Prostate gland (tissue), 2 donors: ENCODE measurements at regions of chr20 and their contacts with region 1.

Region 1: GRCh38 chr20:2451939-2452732 is 18.5 kb downstream of the SNRPB start:
- DNase-seq: peak; percentile 71
- H3K4me3 ChIP-seq: no peak overlapping the region
- H3K27ac ChIP-seq: peak overlapping the region in 1 of 2 donors; percentile 44
- H3K4me1 ChIP-seq: no peaks in the 10 kb centered on the region
- H3K27me3 ChIP-seq: no peaks in the 10 kb centered on the region
- CTCF ChIP-seq: peak; percentile 50 to 74 (median 60)
- POLR2A ChIP-seq: no peak

Region 2: DNA sequence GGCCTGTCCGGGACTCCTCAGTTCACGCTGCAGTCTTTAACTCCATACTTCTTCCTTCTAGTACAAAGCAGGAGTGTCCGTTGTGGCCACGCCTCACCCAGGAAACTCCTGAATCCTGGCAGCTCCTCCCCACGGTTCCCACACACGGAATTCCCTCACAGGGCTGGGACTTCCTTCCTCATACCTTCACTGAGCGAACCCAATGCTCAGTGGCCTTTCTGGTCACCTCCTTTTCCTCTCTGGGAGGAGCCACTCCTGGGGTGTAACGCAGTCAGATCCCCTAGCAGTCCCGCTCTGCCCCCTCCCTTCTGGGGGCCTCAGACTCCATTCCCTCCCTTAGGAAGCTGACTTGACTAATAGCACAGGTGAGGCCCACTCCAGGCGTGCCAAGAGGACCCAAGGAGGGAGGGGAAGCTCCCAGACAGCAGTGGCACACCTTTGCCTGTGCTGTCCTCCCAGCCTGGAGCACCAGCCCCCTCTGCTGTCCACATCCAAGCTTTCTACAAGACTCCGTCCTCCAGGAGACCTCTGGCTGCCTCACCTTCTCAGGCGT is 1683.6 kb before region 1 on chr20 and contains the start of gene SLC52A3:
- intact Hi-C with region 1: no loop called
- DNase-seq: peak; percentile 85
- H3K4me3 ChIP-seq: peak within 1 kb of the TSS in 1 of 2 donors; percentile 30
- H3K27ac ChIP-seq: peak within 1 kb of the TSS; percentile 52 to 74
- H3K4me1 ChIP-seq: peaks cover 6% of the 10 kb centered on the region
- H3K27me3 ChIP-seq: no peaks in the 10 kb centered on the region
- CTCF ChIP-seq: peak in 3 of 4 experiments; percentile 52 to 73 (median 58)
- POLR2A ChIP-seq: peak; percentile 39
- total RNA-seq, gene SLC52A3: 34.3 to 221 TPM

Region 3: DNA sequence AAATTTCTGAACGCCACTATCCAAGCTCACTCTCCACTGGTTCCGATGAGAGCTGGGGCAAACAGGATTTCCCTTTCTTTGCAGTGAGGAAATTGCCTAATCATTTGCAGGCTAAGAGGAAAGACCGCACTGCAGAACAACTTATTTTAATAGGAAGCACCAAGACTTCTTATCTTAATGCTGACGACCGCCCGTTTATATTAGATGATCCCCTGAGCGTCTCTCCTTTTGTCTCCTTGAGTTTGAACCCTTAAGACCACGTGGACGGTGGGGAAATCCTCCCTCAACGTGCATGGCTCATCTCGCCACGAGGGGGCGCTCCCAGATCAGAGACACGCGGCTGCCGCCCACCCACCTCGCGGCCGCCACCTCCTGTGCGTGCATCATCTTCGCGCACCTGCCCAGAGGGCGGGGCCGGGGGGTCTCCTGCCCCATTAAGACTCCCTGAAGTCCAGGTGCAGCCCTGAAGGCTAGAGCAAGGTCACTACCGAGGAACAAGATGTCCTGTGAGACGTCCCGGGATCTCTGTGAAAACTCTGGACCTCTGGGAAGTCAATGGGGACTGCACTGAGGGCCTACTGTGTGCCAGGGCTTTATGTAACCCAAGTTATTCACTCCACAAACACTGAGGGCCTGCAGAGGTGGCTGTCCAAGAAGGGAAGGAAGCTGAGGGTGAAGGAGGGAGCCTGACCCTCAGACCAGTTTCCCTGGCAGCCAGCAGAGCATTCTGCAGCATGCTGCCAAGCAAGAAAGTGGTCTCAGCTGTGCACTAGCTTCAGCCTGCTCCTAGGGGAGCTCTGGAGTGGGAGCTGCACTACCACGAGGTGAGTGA is 486.4 kb before region 1 on chr20:
- intact Hi-C with region 1: loop called (anchors 5 kb)
- DNase-seq: peak; percentile 49
- H3K4me3 ChIP-seq: no peak overlapping the region
- H3K27ac ChIP-seq: no peak overlapping the region
- H3K4me1 ChIP-seq: no peaks in the 10 kb centered on the region
- H3K27me3 ChIP-seq: no peaks in the 10 kb centered on the region
- CTCF ChIP-seq: peak; percentile 89 to 95 (median 94)
- POLR2A ChIP-seq: no peak

Region 4: DNA sequence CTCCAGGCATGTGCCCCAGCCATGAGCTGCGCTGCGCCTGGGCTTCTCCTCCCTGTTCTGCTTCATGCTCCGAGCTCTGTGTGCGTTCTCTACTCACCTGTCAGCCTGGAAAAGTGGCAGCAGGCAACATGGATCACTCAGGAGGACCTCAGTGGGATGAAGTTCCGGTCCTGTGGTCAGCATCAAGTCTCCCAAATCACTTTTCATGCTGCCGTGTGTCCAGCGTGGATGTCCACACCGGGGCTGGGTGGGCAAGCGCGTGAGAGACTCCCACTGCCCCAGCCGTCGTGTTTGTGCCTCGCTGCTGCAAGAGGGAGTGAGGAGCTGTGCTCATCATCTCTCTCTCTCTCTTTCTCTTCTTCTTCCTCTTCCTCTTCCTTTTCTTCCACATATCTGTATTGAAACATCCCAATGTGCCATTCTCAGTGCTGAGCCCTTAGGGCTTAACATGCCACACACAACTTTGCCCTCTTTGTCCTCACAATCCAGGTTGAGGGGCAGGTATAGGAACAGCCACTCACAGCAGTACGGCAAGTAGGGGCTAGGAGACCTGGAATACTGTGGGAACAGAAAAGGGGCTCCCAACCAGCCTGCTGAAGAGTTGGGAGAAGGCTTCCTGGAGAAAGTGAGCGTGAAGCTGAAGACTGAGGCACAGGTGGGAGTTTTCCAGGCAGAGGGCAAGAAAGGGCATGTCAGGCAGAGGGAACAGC is 454.5 kb before region 1 on chr20:
- intact Hi-C with region 1: no loop called
- DNase-seq: no peak
- H3K4me3 ChIP-seq: no peak overlapping the region
- H3K27ac ChIP-seq: no peak overlapping the region
- H3K4me1 ChIP-seq: no peaks in the 10 kb centered on the region
- H3K27me3 ChIP-seq: peaks cover 7% of the 10 kb centered on the region
- CTCF ChIP-seq: no peak
- POLR2A ChIP-seq: no peak

Region 5: DNA sequence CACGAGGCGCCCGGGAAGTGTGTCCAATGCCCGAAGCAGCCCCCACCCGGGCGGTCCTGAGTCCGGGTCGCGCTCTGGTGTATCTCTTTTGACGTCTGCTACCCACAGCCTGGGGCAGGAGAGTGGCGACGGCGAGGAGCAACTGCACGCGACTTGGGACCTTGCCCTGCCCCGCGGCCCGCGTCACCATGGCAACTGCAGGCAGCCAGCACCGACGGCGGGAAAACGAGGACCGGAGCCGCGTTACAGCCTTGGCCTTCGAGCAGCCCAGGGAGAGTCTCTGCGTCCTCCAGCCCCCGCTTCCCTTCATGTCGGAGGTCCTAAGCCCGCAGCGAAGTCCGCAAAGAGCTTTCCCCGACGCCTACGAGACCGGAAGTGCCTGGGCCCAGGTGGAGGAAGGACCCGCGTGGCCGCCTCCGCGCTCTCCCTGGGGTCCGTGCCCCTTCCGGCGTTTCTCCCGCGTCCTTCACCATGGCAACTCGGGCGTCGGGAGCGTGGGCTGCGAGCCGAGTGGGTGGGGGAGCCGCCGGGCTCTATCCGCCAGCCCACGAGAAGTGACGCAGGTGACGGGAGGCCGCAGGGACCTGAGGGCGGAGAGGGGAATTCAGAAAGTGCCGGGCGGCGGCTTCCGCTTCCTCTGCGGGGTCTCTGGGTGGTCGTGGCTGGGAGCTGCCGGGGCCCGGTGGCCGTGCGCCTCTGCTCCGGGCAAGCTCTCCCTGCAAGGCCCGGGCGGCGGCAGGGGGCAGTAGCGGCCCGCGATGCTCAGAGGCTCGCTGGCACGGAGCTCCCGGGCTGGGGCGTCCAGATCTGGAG is 245.0 kb before region 1 on chr20:
- intact Hi-C with region 1: loop called (anchors 2 kb)
- DNase-seq: peak; percentile 43
- H3K4me3 ChIP-seq: peak overlapping the region; percentile 47 to 50
- H3K27ac ChIP-seq: peak overlapping the region in 1 of 2 donors; percentile 23
- H3K4me1 ChIP-seq: no peaks in the 10 kb centered on the region
- H3K27me3 ChIP-seq: no peaks in the 10 kb centered on the region
- CTCF ChIP-seq: peak; percentile 37 to 79 (median 72)
- POLR2A ChIP-seq: no peak